OCI-LY7 (cell line): ENCODE measurements at regions of chr7 and their contacts with region 1.

Region 1: GRCh38 chr7:22726345-22727185 is 435 bp upstream of the IL6 start:
- DNase-seq: peak; percentile 70
- H3K4me3 ChIP-seq: no peak overlapping the region
- H3K27ac ChIP-seq: no peak overlapping the region
- H3K4me1 ChIP-seq: peaks cover 3% of the 10 kb centered on the region
- CTCF ChIP-seq: peak; percentile 82

Region 2: GRCh38 chr7:22782616-22783232 is 56.2 kb after region 1 on chr7:
- CTCF ChIA-PET with region 1: interaction called, 3 read pairs
- POLR2A ChIA-PET with region 1: interaction called, 3 read pairs
- intact Hi-C with region 1: loop called (anchors 5 kb)
- DNase-seq: peak; percentile 75
- H3K4me3 ChIP-seq: no peak overlapping the region
- H3K27ac ChIP-seq: no peak overlapping the region
- H3K4me1 ChIP-seq: no peaks in the 10 kb centered on the region
- CTCF ChIP-seq: peak; percentile 97